ENCODE measurements at regions of chr4 and their contacts with region 1.

Region 1: DNA sequence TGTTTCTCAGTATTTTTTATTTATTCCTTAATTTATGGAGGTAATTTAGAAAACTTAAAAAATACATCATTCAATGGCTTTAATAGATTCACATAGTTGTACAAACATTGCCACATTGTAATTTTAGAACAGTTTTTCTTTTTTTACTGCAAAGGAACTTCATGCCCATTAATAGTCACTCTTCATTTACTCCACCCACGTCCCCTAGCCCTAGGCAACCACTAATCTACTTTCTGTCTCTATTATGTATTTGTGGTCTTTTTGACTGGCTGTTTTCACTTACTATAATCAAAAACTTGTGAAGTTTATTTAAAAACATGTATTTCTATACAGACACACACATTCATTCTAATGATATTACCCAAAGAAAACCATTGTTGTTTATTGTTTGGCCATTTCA is 664.8 kb downstream of the GRID2 start:
- DNase-seq: no peak
- ATAC-seq: no peak
- H3K4me3 ChIP-seq: no peak overlapping the region
- H3K4me3 Mint-ChIP-seq: no peak overlapping the region
- H3K27ac ChIP-seq: no peak overlapping the region
- H3K27ac Mint-ChIP-seq: no peak overlapping the region
- H3K4me1 ChIP-seq: no peaks in the 10 kb centered on the region
- H3K4me1 Mint-ChIP-seq: no peaks in the 10 kb centered on the region
- H3K27me3 ChIP-seq: no peaks in the 10 kb centered on the region
- H3K27me3 Mint-ChIP-seq: no peaks in the 10 kb centered on the region

Region 2: DNA sequence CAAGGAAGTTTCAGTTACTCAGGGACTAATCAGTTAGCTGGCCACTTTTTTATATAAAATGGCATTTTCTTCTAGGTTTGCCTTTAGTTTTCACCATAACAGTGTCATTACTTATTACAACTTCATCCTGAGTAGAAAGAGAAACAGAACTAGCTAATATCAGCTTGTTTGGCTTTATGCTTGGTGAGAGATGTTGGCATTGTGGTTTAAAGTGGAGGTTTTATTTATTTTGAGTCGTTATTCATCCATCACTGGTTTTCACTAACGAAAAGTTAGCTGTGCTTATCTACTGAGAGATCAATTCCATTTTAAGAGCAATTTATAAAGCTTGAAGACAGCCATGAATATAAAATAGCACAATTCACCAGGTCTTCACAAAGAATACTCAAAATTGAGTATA is 49.7 kb after region 1 on chr4:
- CTCF ChIA-PET with region 1: no interaction called
- POLR2A ChIA-PET with region 1: no interaction called
- intact Hi-C with region 1: loop called in 1 of 2 experiments (anchors 1 kb)
- DNase-seq: no peak
- ATAC-seq: no peak
- H3K4me3 ChIP-seq: no peak overlapping the region
- H3K4me3 Mint-ChIP-seq: no peak overlapping the region
- H3K27ac ChIP-seq: no peak overlapping the region
- H3K27ac Mint-ChIP-seq: no peak overlapping the region
- H3K4me1 ChIP-seq: no peaks in the 10 kb centered on the region
- H3K4me1 Mint-ChIP-seq: no peaks in the 10 kb centered on the region
- H3K27me3 ChIP-seq: no peaks in the 10 kb centered on the region
- H3K27me3 Mint-ChIP-seq: no peaks in the 10 kb centered on the region

Region 3: DNA sequence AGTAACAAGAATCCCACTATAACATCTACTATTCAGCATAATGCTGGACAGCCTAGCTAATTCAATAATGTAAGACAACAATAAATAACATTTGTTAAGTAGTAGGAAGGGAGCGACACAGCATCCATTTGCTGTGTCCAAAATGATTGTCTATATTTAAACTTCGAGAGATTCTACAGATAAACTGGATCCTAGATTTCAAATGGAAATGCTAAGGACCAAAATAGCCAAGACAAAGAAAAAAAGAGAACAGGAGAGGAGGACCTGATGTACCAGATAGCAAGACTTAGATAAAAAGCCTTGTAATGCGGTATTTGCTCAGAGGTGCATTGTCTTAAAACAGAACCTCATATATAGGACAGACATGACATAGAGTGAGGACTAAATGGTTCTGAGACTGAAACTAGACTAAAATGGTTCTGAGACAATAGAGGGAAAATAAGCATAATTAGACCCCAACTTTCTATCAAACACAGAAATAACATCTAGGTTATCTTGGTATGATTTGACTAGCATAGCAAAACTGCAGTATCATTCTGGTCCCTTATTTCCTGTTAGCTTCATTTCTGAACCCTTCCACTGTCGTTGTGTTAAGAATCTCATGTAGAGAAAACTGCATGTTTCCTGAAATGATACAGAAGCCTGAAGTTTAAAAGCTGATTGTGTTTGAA is 1370.3 kb after region 1 on chr4:
- CTCF ChIA-PET with region 1: no interaction called
- POLR2A ChIA-PET with region 1: no interaction called
- intact Hi-C with region 1: no loop called
- DNase-seq: peak in 1 of 9 donors; percentile 8
- ATAC-seq: peak; percentile 38
- H3K4me3 ChIP-seq: peak overlapping the region; percentile 31
- H3K4me3 Mint-ChIP-seq: peak overlapping the region; percentile 11 to 89 (median 80)
- H3K27ac ChIP-seq: peak overlapping the region; percentile 5
- H3K27ac Mint-ChIP-seq: peak overlapping the region; percentile 6 to 91 (median 80)
- H3K4me1 ChIP-seq: no peaks in the 10 kb centered on the region
- H3K4me1 Mint-ChIP-seq: peaks cover 0 to 24% (median 20%) of the 10 kb centered on the region in 7 donors
- H3K27me3 ChIP-seq: no peaks in the 10 kb centered on the region
- H3K27me3 Mint-ChIP-seq: no peaks in the 10 kb centered on the region